ENCODE measurements at regions of chr4 and their contacts with region 1.

Region 1: GRCh38 chr4:62028745-62029144 is 828.6 kb downstream of the ADGRL3 start:
- DNase-seq: no peak
- H3K4me3 ChIP-seq: no peak overlapping the region
- H3K27ac ChIP-seq: no peak overlapping the region
- H3K4me1 ChIP-seq: no peaks in the 10 kb centered on the region
- H3K27me3 ChIP-seq: no peaks in the 10 kb centered on the region
- CTCF ChIP-seq: no peak

Region 2: DNA sequence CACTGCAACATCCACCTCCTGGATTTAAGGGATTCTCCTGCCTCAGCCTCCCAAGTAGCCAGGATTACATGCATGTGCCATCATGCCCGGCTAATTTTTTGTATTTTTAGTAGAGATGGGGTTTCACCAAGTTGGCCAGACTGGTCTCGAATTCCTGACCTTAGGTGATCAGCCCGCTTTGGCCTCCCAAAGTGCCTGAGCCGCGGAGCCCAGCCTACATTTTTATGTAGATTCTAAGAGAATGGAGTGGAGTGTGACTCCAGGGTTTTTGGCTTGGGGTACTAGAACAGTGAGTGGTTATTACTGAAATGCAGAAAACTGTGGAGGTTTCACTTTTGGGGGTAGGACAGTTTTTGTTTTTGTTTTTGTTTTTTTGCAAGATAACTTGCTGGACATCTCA is 22.6 kb before region 1 on chr4:
- CTCF ChIA-PET with region 1: no interaction called
- POLR2A ChIA-PET with region 1: no interaction called
- intact Hi-C with region 1: no loop called
- DNase-seq: no peak
- H3K4me3 ChIP-seq: no peak overlapping the region
- H3K27ac ChIP-seq: no peak overlapping the region
- H3K4me1 ChIP-seq: no peaks in the 10 kb centered on the region
- H3K27me3 ChIP-seq: no peaks in the 10 kb centered on the region
- CTCF ChIP-seq: no peak

Region 3: GRCh38 chr4:62191451-62192240 is 162.9 kb after region 1 on chr4:
- CTCF ChIA-PET with region 1: no interaction called
- POLR2A ChIA-PET with region 1: interaction called, 12 read pairs
- intact Hi-C with region 1: no loop called
- DNase-seq: no peak
- H3K4me3 ChIP-seq: no peak overlapping the region
- H3K27ac ChIP-seq: no peak overlapping the region
- H3K4me1 ChIP-seq: no peaks in the 10 kb centered on the region
- H3K27me3 ChIP-seq: no peaks in the 10 kb centered on the region
- CTCF ChIP-seq: no peak

Measured in PC-9 (cell line).